ENCODE measurements at regions of chr1 and their contacts with region 1.

Region 1: GRCh38 chr1:234271243-234271606 is 102.0 kb upstream of the COA6 start:
- DNase-seq: no peak
- H3K4me3 Mint-ChIP-seq: no peak overlapping the region
- H3K27ac Mint-ChIP-seq: no peak overlapping the region
- H3K4me1 Mint-ChIP-seq: peaks cover 24% of the 10 kb centered on the region
- H3K27me3 Mint-ChIP-seq: peaks cover 7% of the 10 kb centered on the region

Region 2: DNA sequence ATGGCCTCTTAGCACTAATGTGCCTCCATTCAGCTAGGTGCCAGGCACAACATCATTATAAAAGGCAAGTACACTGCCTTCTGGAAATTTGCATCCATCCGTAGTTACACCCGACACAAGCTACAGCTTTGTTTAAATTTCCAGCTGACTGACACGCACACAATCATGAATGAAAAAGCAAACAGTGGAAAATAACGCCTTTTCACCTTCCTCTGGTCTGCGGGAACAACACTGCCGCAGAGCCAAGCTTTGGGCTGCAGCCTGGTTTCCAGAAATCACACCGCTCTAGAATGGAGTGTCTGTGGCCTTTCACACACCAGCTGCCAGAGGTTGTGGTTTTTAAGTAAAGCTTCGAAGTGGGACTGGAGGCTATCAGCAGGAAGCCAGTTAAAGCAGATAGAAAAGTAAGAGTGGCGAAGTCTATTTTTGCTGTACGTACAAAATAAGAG is 40.8 kb before region 1 on chr1:
- intact Hi-C with region 1: loop called (anchors 5 kb)
- DNase-seq: peak; percentile 13
- H3K4me3 Mint-ChIP-seq: peak overlapping the region; percentile 5
- H3K27ac Mint-ChIP-seq: peak overlapping the region; percentile 49
- H3K4me1 Mint-ChIP-seq: peaks cover 16% of the 10 kb centered on the region
- H3K27me3 Mint-ChIP-seq: peaks cover 40% of the 10 kb centered on the region

Region 3: GRCh38 chr1:234244482-234244881 is 26.7 kb before region 1 on chr1:
- intact Hi-C with region 1: loop called (anchors 1 kb)
- DNase-seq: no peak
- H3K4me3 Mint-ChIP-seq: no peak overlapping the region
- H3K27ac Mint-ChIP-seq: no peak overlapping the region
- H3K4me1 Mint-ChIP-seq: peaks cover 13% of the 10 kb centered on the region
- H3K27me3 Mint-ChIP-seq: peaks cover 12% of the 10 kb centered on the region

Region 4: GRCh38 chr1:234309598-234310459 is 38.6 kb after region 1 on chr1:
- intact Hi-C with region 1: loop called (anchors 1 kb)
- DNase-seq: peak; percentile 47
- H3K4me3 Mint-ChIP-seq: no peak overlapping the region
- H3K27ac Mint-ChIP-seq: peak overlapping the region; percentile 5
- H3K4me1 Mint-ChIP-seq: peaks cover 14% of the 10 kb centered on the region
- H3K27me3 Mint-ChIP-seq: peaks cover 1% of the 10 kb centered on the region

Region 5: GRCh38 chr1:234315091-234315541 is 43.9 kb after region 1 on chr1:
- intact Hi-C with region 1: loop called (anchors 1 kb)
- DNase-seq: no peak
- H3K4me3 Mint-ChIP-seq: peak overlapping the region; percentile 12
- H3K27ac Mint-ChIP-seq: peak overlapping the region; percentile 32
- H3K4me1 Mint-ChIP-seq: peaks cover 24% of the 10 kb centered on the region
- H3K27me3 Mint-ChIP-seq: peaks cover 5% of the 10 kb centered on the region

Region 6: GRCh38 chr1:235791532-235792060 is 1520.4 kb after region 1 on chr1:
- intact Hi-C with region 1: no loop called
- DNase-seq: no peak
- H3K4me3 Mint-ChIP-seq: no peak overlapping the region
- H3K27ac Mint-ChIP-seq: peak overlapping the region; percentile 29
- H3K4me1 Mint-ChIP-seq: no peaks in the 10 kb centered on the region
- H3K27me3 Mint-ChIP-seq: no peaks in the 10 kb centered on the region